ENCODE measurements at regions of chrX and their contacts with region 1.

Region 1: GRCh38 chrX:40406330-40406859 is 174.4 kb upstream of the ATP6AP2 start:
- DNase-seq: no peak
- ATAC-seq: no peak
- H3K4me3 ChIP-seq: no peak overlapping the region
- H3K4me1 ChIP-seq: no peaks in the 10 kb centered on the region
- CTCF ChIP-seq: no peak

Region 2: GRCh38 chrX:40074080-40074958 is 332.1 kb before region 1 on chrX:
- intact Hi-C with region 1: loop called in 1 of 2 experiments (anchors 5 kb)
- DNase-seq: no peak
- ATAC-seq: no peak
- H3K4me3 ChIP-seq: no peak overlapping the region
- H3K4me1 ChIP-seq: no peaks in the 10 kb centered on the region
- CTCF ChIP-seq: no peak